Astrocyte of the cerebellum (primary cell): ENCODE measurements at regions of chr15 and their contacts with region 1.

Region 1: GRCh38 chr15:35174948-35175347 is 89.9 kb upstream of the NANOGP8 start:
- DNase-seq: no peak
- H3K4me3 ChIP-seq: no peak overlapping the region
- CTCF ChIP-seq: no peak

Region 2: DNA sequence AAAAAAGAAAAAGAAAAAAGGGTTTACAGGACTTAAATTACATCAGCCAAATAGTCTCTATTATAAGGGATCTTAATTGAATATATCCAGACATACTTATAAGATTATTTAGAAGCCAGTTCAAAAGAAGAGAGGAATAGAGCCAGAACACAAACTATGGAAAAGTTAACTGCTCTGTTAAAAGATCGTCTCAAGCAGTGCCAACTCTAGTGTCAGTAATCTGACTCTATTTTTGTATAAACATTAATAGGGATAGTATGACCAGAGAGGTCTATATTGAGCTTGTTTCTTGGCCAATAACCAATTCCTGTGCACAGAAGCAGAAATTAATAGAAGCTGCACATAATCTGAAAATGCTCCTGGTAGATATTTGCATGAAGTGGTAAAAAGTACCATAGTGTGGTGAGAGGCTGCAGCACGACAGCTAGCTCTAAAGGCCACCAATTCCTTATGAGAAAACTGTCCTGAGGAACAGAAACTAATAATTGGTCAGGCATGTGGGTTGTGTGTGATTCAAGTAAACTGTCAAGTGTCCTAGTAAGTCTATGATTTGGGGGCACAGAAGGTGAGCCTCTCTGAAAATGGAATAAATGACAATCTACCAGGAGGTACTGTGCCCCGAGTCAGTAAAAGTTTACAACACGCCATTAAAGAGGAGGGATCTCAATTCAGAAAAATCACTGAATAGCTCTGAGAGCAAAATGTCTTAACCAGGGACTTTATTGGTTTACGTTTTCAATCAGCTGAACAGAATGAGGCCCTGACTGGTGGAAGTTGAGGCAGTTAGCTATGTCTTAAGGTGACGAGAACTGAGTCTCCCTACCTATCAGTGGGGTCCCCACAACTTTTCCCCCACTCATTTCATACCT is 38.4 kb before region 1 on chr15:
- in situ Hi-C with region 1: loop called (anchors 5 kb)
- DNase-seq: no peak
- H3K4me3 ChIP-seq: no peak overlapping the region
- CTCF ChIP-seq: no peak